Activated naive CD4-positive, alpha-beta T cell treated with anti-CD3 and anti-CD28 coated beads, Interleukin-2, amount 10 ng/mL, durations not matched to agents 7 days and 5 days (primary cell): ENCODE measurements at regions of chr15 and their contacts with region 1.

Region 1: DNA sequence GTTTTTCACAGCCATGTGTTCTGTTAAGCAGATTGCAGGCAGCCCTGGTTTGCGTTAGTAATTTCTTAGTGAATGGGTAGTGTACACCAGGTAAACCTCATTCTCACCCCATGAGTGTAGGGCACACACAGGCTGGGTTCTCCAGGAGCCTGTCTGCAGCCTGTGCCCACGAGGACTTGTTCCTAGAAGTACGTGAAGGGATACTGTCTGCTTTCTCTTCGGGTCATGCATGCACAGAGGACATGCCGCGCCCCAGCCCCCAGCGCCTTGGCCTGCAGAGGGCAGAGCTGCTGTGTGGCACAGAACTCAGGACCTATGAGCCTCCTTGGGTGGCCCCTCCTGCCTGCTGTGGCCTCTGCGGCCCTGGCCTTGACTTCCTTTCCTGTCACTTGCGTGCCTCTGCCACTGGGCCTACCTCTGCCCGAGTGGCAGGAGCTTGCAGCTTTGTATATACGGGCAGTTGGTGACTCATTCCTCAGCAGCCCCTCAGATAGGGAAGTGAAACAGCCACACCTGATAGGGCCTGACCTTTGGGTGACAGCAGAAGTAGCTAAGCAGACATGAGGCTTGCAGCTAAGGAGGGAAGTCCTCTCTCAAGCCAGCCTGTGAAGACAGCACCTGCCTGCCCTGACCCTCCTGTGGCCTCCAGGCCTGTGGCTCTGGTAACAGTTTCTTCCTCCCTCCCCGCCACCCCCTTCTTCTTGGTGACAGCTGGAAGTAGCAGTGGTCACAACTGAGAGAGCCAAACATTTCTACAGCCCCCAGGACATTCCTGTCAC is 19.5 kb downstream of the PPCDC start:
- DNase-seq: peak; percentile 84
- H3K4me3 Mint-ChIP-seq: no peak overlapping the region
- H3K27ac Mint-ChIP-seq: peak overlapping the region; percentile 85
- H3K4me1 Mint-ChIP-seq: peaks cover 66% of the 10 kb centered on the region
- H3K27me3 Mint-ChIP-seq: no peaks in the 10 kb centered on the region

Region 2: DNA sequence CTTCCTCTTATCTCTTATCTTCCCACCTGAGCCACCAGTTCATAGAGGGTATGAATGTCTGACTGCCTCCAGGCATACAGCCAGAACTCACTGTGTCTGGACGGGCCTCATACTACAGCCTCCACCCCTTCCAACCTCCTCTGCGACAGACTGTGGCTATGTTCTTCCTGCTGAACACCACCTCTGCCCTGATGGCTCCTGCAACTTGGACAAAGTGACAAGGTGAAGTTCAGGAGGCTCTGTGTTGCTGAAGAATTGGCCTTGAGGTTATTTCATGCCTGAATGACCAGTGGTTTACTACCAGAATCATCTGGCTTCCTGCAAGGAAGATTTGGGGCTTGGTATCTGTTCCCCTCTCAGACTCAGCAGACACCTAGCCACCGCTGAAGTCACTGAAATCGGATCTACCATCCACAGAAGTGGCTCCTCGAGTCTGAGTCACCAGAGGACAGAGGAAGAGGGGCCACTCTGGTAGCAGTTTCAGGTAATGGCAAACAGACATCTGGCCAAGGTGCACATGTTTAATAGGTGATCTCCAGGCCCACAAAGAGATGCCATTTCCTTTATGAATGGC is 185.8 kb before region 1 on chr15:
- CTCF ChIA-PET with region 1: no interaction called
- DNase-seq: no peak
- H3K4me3 Mint-ChIP-seq: no peak overlapping the region
- H3K27ac Mint-ChIP-seq: peak overlapping the region; percentile 58
- H3K4me1 Mint-ChIP-seq: peaks cover 34% of the 10 kb centered on the region
- H3K27me3 Mint-ChIP-seq: no peaks in the 10 kb centered on the region

Region 3: GRCh38 chr15:74956648-74957300 is 86.1 kb before region 1 on chr15 and contains the start of gene RPP25:
- CTCF ChIA-PET with region 1: no interaction called
- DNase-seq: peak; percentile 84
- H3K4me3 Mint-ChIP-seq: peak within 1 kb of the TSS; percentile 71
- H3K27ac Mint-ChIP-seq: no peak within 1 kb of the TSS
- H3K4me1 Mint-ChIP-seq: peaks cover 53% of the 10 kb centered on the region
- H3K27me3 Mint-ChIP-seq: peaks cover 69% of the 10 kb centered on the region

Region 4: DNA sequence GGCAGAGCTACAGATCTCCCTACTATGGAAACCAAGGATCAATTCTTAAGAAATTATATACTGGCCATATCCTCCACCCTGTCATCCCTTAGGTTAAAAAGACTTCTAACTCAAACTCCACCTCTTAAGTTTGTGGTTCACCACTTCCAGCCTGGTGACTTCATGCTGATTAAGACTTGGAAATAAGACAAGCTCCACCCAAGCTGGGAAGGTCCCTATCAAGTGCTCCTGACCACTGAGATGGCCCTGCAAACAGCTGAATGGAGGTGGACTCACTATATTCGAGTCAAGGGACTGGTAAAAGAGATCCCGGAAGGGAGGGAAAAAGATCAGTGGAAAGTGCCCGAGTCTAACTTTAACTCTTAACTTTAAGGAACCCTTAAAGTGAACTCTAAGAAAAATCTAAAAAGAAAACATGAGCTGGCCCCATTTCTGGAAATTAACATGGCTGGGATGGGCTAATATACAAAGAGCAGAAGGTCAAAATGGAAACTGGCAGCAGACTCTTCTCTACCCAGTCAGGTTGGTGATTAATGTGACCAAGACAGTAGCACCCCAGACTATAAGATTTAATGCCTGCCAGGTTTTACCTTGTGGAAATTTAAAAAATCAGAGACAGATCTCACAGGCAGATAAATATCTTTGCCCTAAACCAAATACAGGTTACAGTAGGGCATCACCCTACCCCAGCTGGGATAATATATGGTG is 24.4 kb after region 1 on chr15:
- CTCF ChIA-PET with region 1: interaction called, 14 read pairs
- DNase-seq: peak; percentile 75
- H3K4me3 Mint-ChIP-seq: peak overlapping the region; percentile 33
- H3K27ac Mint-ChIP-seq: peak overlapping the region; percentile 90
- H3K4me1 Mint-ChIP-seq: peaks cover 68% of the 10 kb centered on the region
- H3K27me3 Mint-ChIP-seq: peaks cover 45% of the 10 kb centered on the region

Region 5: DNA sequence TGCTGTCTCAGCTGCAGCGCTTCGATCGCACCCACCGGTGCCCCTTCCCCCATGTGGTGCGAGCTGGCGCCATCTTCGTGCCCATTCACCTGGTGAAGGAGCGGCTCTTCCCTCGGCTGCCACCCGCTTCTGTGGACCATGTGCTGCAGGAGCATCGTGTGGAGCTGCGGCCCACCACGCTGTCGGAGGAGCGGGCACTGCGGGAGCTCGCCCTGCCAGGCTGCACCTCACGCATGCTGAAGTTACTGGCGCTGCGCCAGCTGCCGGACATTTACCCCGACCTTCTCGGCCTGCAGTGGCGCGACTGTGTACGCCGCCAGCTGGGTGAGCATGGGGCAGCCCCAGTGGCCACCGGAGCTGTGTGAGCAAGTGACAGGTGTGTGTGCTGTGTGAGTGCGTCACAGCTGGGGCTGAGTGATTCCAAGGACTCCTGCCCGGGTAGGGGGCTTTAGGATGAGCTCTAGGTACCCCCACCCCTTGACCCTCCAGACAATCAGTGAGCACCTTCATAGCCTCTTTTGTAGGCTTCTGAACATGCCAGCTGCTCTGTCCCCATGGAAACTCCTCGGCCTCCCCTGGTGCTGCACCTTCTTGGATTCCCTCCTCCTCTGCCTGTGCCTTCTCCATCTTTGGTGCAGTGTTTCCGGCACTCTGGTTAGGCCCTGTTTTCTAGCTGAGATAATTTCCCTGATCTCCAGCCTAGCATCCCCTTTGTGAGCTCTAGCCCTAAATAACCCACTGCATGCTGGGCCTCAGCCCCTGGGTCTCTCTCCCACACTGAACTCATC is 165.8 kb after region 1 on chr15:
- CTCF ChIA-PET with region 1: interaction called, 66 read pairs
- DNase-seq: no peak
- H3K4me3 Mint-ChIP-seq: no peak overlapping the region
- H3K27ac Mint-ChIP-seq: no peak overlapping the region
- H3K4me1 Mint-ChIP-seq: peaks cover 38% of the 10 kb centered on the region
- H3K27me3 Mint-ChIP-seq: no peaks in the 10 kb centered on the region